ENCODE measurements at regions of chr1 and their contacts with region 1.

Region 1: DNA sequence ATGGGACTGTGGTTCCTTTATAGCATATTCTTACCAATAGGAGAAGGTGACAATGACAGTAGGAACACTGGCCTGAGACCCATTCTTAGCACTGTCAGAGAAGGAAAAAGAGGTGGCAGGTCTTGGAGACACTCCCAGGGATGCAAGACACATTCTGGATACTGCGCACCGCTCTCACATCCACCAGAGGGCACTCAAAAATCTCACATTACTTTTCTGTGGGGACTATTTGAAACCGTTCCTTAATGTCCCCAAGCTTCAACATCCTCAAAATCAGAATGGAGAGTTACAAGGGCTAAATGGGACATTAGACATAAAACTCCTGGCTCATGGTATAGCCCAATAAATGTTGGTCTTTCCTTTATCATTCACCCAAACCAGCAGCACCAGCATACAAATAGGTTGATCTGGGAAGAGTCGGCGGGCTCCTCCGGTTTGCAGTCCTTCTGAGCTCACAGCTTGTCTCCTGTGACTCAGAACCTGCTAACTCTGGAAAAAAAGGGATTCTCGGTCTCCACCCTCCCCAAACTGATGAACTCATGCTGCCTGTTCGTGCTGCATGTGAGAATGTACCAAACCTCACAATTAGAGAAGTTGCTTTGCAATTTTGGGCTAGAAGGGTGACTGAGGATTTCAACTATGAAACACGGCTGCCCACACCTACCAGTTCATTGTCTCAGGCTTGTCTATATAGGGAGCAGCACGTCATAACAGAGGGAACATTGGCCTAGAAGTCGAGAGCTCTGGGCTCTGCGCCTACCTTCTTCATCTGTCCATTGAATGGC is 40.2 kb downstream of the IL12RB2 start:
- DNase-seq: peak; percentile 85
- H3K4me3 ChIP-seq: peak overlapping the region in 2 of 3 experiments; percentile 5 to 9
- H3K27ac ChIP-seq: peak overlapping the region; percentile 60
- H3K4me1 ChIP-seq: peaks cover 37% of the 10 kb centered on the region
- H3K27me3 ChIP-seq: no peaks in the 10 kb centered on the region
- CTCF ChIP-seq: peak; percentile 81 to 87

Region 2: GRCh38 chr1:66924756-66925557 is 422.9 kb before region 1 on chr1 and contains the starts of genes DNAI4 and MIER1:
- CTCF ChIA-PET with region 1: no interaction called
- dilution Hi-C with region 1: no loop called
- in situ Hi-C with region 1: no loop called
- intact Hi-C with region 1: no loop called
- DNase-seq: peak; percentile 99
- H3K4me3 ChIP-seq: peak within 1 kb of the TSS; percentile 65 to 99 (median 86)
- H3K27ac ChIP-seq: peak within 1 kb of the TSS; percentile 99
- H3K4me1 ChIP-seq: peaks cover 15% of the 10 kb centered on the region
- H3K27me3 ChIP-seq: no peaks in the 10 kb centered on the region
- CTCF ChIP-seq: peak in 1 of 2 donors; percentile 33
- total RNA-seq, gene DNAI4: 2.9 to 6.0 TPM
- total RNA-seq, gene MIER1: 33.0 to 35.7 TPM

Region 3: GRCh38 chr1:67414574-67414973 is 66.7 kb after region 1 on chr1:
- CTCF ChIA-PET with region 1: no interaction called
- dilution Hi-C with region 1: no loop called
- in situ Hi-C with region 1: no loop called
- intact Hi-C with region 1: loop called (anchors 5 kb)
- DNase-seq: no peak
- H3K4me3 ChIP-seq: no peak overlapping the region
- H3K27ac ChIP-seq: no peak overlapping the region
- H3K4me1 ChIP-seq: no peaks in the 10 kb centered on the region
- H3K27me3 ChIP-seq: no peaks in the 10 kb centered on the region
- CTCF ChIP-seq: no peak

Region 4: DNA sequence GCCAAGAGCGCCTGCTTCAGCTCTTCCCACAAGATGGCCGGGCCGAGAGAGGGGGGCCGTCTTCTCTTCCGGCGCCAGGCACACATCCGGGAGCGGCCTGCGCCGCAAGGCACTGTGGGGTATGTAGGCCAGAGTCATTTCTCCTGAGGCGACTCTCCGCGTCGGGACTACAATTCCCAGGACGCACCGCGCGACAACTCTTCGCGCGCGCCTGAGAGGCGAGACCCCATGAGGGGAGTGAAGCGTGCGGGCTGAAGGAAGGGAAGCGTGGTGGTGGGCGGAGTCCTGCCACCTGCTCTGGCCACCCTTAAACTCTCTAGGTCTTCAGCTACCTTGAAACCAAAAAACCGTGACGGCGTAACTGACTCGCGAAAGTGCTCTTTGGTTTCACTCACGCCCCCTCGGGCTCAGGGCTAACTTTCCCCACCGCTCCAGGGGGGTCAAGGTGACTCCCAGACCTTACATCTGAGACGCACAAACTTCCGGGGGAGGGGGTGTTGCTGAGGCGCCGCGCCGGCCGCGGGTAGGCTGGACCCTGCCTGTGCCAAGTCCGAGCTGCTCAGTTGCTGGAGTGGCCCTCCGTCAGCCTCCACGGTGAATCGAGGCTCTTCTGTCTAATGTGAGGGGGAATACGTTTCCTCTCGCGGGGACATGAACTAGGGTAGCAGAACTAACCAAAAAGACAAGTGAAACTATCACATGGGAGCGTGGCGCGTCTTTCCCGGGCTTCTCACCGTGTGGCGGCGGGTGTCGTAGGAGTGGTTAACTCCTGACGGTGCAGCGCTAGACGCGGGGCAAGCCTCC is 82.7 kb after region 1 on chr1 and contains the start of gene SERBP1:
- CTCF ChIA-PET with region 1: interaction called, 4 read pairs
- dilution Hi-C with region 1: loop called (anchors 5 kb)
- in situ Hi-C with region 1: no loop called
- intact Hi-C with region 1: loop called (anchors 1 kb)
- DNase-seq: peak; percentile 97
- H3K4me3 ChIP-seq: peak within 1 kb of the TSS; percentile 83 to 99 (median 93)
- H3K27ac ChIP-seq: peak within 1 kb of the TSS; percentile 94
- H3K4me1 ChIP-seq: peaks cover 21% of the 10 kb centered on the region
- H3K27me3 ChIP-seq: no peaks in the 10 kb centered on the region
- CTCF ChIP-seq: peak in 1 of 2 donors; percentile 0
- total RNA-seq, gene SERBP1: 166 to 276 TPM

Measured in mammary epithelial cell (primary cell).